Caco-2 (cell line): ENCODE measurements at regions of chr4 and their contacts with region 1.

Region 1: GRCh38 chr4:110636680-110637407 is 14.0 kb upstream of the PITX2 start:
- DNase-seq: peak; percentile 86
- H3K4me3 ChIP-seq: peak overlapping the region; percentile 73
- H3K4me3 Mint-ChIP-seq: peak overlapping the region; percentile 88
- H3K27ac Mint-ChIP-seq: peak overlapping the region; percentile 93
- H3K4me1 ChIP-seq: 0 out of 2 replicates have a peak, but pooled peaks cover 8% of the 10 kb centered on the region
- H3K4me1 Mint-ChIP-seq: peaks cover 20% of the 10 kb centered on the region
- H3K27me3 ChIP-seq: no peaks in the 10 kb centered on the region
- H3K27me3 Mint-ChIP-seq: no peaks in the 10 kb centered on the region
- CTCF ChIP-seq: no peak

Region 2: GRCh38 chr4:110622841-110623717 is 13.8 kb before region 1 on chr4 and contains the start of gene PITX2:
- CTCF ChIA-PET with region 1: interaction called, 6 read pairs
- POLR2A ChIA-PET with region 1: interaction called, 4 read pairs
- intact Hi-C with region 1: loop called (anchors 1 kb)
- DNase-seq: peak; percentile 99
- H3K4me3 ChIP-seq: peak within 1 kb of the TSS; percentile 58
- H3K4me3 Mint-ChIP-seq: peak within 1 kb of the TSS; percentile 92
- H3K27ac Mint-ChIP-seq: peak within 1 kb of the TSS; percentile 86
- H3K4me1 ChIP-seq: peaks cover 44% of the 10 kb centered on the region
- H3K4me1 Mint-ChIP-seq: peaks cover 47% of the 10 kb centered on the region
- H3K27me3 ChIP-seq: no peaks in the 10 kb centered on the region
- H3K27me3 Mint-ChIP-seq: no peaks in the 10 kb centered on the region
- CTCF ChIP-seq: no peak
- total RNA-seq, gene PITX2: 76.8 and 82.8 TPM in 2 replicates